ENCODE measurements at regions of chr17 and their contacts with region 1.

Region 1: DNA sequence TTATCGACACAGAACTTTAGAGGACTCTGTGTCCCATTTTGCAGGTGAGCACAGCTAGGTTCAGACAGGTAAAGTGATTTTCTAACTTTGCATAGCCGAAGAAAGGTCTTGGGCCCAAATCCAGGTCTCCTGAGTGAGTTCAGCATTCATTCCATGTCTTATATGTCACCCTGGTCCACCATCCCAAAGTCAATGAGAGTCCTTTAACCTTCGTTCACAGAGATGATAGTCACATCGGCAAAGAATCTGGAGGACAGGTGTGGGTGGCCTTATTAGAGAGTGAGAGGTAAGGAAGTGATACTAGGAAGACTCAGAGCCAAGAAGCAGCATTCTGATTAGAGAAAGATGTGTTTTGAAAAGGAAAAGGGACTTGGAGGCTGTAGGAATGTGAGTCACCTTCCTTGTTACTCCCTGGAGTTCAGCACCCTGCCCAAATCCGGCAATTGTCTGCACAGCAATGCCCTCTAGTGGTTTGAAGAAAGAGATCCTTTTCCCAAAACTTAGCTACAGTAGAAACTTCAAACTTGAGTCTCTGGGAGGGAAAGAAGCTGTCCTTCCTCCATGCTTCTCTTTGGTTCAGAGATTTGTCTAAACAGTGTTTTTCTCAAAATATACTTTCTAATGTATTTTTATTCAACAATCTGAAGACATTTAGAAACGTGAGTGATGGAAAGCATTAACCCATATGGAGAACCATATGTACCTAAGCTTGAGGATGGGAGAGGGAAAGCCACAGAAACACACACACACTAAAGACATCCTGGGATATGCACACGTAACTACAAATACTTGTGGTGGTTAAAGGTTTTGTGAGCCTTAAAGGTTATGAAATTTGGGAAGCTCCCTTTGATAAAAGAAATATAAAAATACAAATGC is 96.4 kb upstream of the SHISA6 start:
- DNase-seq: peak in 2 of 5 donors; percentile 25 to 36
- ATAC-seq: peak in 3 of 4 donors; percentile 52 to 62 (median 57)
- H3K4me3 ChIP-seq: no peak overlapping the region
- H3K27ac ChIP-seq: no peak overlapping the region
- H3K4me1 ChIP-seq: no peaks in the 10 kb centered on the region
- H3K27me3 ChIP-seq: peaks cover 0 to 9% (median 0%) of the 10 kb centered on the region in 9 donors
- CTCF ChIP-seq: peak in 11 of 12 donors; percentile 45 to 75 (median 62)
- POLR2A ChIP-seq: no peak

Region 2: GRCh38 chr17:10646392-10646990 is 498.1 kb before region 1 on chr17:
- intact Hi-C with region 1: loop called in 1 of 10 experiments (anchors 10 kb)
- DNase-seq: peak; percentile 63 to 80 (median 64)
- ATAC-seq: peak in 3 of 4 donors; percentile 51 to 73 (median 65)
- H3K4me3 ChIP-seq: no peak overlapping the region
- H3K27ac ChIP-seq: no peak overlapping the region
- H3K4me1 ChIP-seq: peaks cover 0 to 3% (median 0%) of the 10 kb centered on the region in 12 donors
- H3K27me3 ChIP-seq: no peaks in the 10 kb centered on the region
- CTCF ChIP-seq: peak; percentile 72 to 89 (median 83)
- POLR2A ChIP-seq: no peak

Region 3: GRCh38 chr17:10729334-10730193 is 415.0 kb before region 1 on chr17 and contains the start of gene TMEM220:
- intact Hi-C with region 1: loop called in 1 of 10 experiments (anchors 10 kb)
- DNase-seq: peak; percentile 80 to 91 (median 89)
- ATAC-seq: peak; percentile 87 to 97 (median 96)
- H3K4me3 ChIP-seq: peak within 1 kb of the TSS; percentile 62 to 82 (median 76)
- H3K27ac ChIP-seq: peak within 1 kb of the TSS; percentile 86 to 99 (median 90)
- H3K4me1 ChIP-seq: peaks cover 0 to 11% (median 4%) of the 10 kb centered on the region in 12 donors
- H3K27me3 ChIP-seq: no peaks in the 10 kb centered on the region
- CTCF ChIP-seq: no peak
- POLR2A ChIP-seq: peak in 1 of 2 donors; percentile 53
- total RNA-seq, gene TMEM220: 3.8 to 13.9 (median 6.3) TPM

Region 4: GRCh38 chr17:10737168-10737622 is 407.4 kb before region 1 on chr17:
- intact Hi-C with region 1: loop called in 4 of 10 experiments (anchors 5 to 10 kb)
- DNase-seq: peak in 3 of 5 donors; percentile 40 to 48 (median 45)
- ATAC-seq: peak; percentile 54 to 83 (median 72)
- H3K4me3 ChIP-seq: no peak overlapping the region
- H3K27ac ChIP-seq: no peak overlapping the region
- H3K4me1 ChIP-seq: peaks cover 0 to 3% (median 0%) of the 10 kb centered on the region in 12 donors
- H3K27me3 ChIP-seq: no peaks in the 10 kb centered on the region
- CTCF ChIP-seq: peak; percentile 62 to 82 (median 70)
- POLR2A ChIP-seq: no peak

Region 5: DNA sequence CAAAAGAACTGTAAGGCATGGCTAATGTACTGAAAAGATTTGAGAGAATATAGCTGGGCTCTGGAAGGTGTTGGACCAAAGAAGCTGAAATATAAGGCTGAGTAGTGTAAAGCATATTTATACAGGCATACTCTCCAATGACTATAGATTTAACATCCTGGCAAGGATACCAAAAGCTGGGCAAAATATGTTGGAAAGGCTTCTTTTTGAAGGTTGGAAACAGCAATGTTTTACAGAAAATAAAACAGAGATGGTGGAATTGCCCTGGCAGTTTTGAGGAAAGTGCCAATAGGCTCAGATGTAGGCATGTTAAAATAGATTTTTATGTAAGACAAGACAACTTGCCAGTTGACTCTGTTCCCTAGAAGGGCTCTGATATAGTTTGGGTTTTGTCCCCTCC is 87.7 kb before region 1 on chr17:
- intact Hi-C with region 1: no loop called
- DNase-seq: no peak
- ATAC-seq: no peak
- H3K4me3 ChIP-seq: no peak overlapping the region
- H3K27ac ChIP-seq: no peak overlapping the region
- H3K4me1 ChIP-seq: no peaks in the 10 kb centered on the region
- H3K27me3 ChIP-seq: no peaks in the 10 kb centered on the region
- CTCF ChIP-seq: no peak
- POLR2A ChIP-seq: no peak

Region 6: DNA sequence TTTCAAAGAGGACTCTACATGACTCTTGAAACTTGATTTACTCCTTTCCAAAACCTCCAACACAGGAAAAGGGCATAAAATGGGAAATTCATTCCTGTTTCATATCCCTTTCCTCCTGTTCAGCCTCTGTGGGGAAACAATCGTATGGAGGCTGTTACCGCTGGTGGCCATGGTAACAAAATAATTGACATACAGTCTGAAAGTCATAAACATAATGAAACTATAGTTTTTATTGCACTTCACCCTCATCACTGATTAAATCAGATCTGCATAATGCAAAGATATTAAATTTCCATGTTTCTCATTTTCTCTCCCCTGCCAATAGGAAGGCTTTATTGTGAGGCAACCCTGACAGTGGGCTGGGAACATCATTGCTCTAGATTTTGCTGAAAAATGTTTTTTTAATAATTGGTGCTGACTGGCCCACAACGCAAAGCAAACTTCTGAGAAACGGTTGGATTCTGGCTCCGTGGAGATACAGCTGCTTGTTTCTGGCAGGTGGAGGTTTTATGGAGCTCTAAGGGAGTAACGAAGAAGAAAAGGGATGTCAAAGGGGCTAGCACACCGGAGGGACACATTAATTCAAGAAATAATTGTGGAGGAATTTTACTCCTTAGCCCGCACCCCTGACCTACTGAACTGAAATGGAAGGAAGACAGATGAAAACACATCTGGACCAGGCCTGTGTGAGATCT is 57.8 kb before region 1 on chr17:
- intact Hi-C with region 1: no loop called
- DNase-seq: no peak
- ATAC-seq: no peak
- H3K4me3 ChIP-seq: no peak overlapping the region
- H3K27ac ChIP-seq: no peak overlapping the region
- H3K4me1 ChIP-seq: no peaks in the 10 kb centered on the region
- H3K27me3 ChIP-seq: peaks cover 0 to 4% (median 0%) of the 10 kb centered on the region in 9 donors
- CTCF ChIP-seq: no peak
- POLR2A ChIP-seq: no peak

Region 7: DNA sequence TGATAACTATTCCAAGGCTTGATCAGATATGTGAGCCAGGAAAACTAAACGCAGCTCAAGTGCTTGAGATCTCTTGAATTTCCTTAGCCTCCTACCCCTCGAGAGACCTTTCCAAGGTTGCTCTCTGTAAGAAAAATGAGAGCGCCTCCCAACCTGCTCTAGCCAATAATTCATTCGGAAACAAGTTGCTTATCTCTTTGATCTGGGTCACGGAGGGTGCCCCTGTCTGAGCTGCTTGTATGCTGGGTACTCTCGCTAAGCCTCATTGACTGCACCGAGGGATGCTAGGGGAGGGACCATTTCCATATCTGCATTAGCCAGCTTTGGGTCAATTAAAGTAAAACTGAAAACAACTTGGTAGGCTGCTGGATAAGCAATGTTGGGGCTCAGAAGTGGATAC is 26.3 kb after region 1 on chr17:
- intact Hi-C with region 1: no loop called
- DNase-seq: no peak
- ATAC-seq: no peak
- H3K4me3 ChIP-seq: no peak overlapping the region
- H3K27ac ChIP-seq: no peak overlapping the region
- H3K4me1 ChIP-seq: no peaks in the 10 kb centered on the region
- H3K27me3 ChIP-seq: peaks cover 0 to 11% (median 0%) of the 10 kb centered on the region in 9 donors
- CTCF ChIP-seq: no peak
- POLR2A ChIP-seq: no peak

Region 8: GRCh38 chr17:11340798-11341197 is 196.2 kb after region 1 on chr17:
- intact Hi-C with region 1: no loop called
- DNase-seq: no peak
- ATAC-seq: no peak
- H3K4me3 ChIP-seq: no peak overlapping the region
- H3K27ac ChIP-seq: no peak overlapping the region
- H3K4me1 ChIP-seq: no peaks in the 10 kb centered on the region
- H3K27me3 ChIP-seq: peaks cover 0 to 6% (median 0%) of the 10 kb centered on the region in 9 donors
- CTCF ChIP-seq: no peak
- POLR2A ChIP-seq: no peak

Region 9: DNA sequence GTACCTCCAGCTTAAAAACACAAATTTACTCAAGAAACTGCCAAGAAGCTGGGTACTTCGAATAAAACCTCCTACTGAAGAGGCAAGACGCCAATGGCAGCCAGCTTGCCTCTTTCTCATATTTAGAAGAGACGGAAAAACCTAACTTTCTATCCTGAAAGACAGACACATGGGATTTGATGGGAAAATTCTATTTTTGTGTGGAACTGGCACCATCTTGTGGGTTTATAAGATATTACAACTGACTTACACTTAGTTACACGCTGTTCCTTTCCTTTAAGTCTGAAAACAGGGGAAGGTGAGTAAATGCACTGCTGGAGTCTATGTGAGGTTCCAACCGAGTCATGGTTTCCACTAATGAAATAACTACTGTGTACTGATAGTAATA is 842.3 kb after region 1 on chr17:
- intact Hi-C with region 1: loop called in 1 of 10 experiments (anchors 5 kb)
- DNase-seq: no peak
- ATAC-seq: peak; percentile 34 to 76 (median 54)
- H3K4me3 ChIP-seq: no peak overlapping the region
- H3K27ac ChIP-seq: peak overlapping the region in 2 of 12 donors; percentile 48 to 59
- H3K4me1 ChIP-seq: peaks cover 0 to 11% (median 0%) of the 10 kb centered on the region in 12 donors
- H3K27me3 ChIP-seq: no peaks in the 10 kb centered on the region
- CTCF ChIP-seq: peak; percentile 25 to 66 (median 52)
- POLR2A ChIP-seq: no peak

Measured in heart left ventricle (tissue), 16 donors.